Activated CD4-positive, alpha-beta memory T cell treated with anti-CD3 and anti-CD28 coated beads for 36 hours (primary cell): ENCODE measurements at regions of chr2 and their contacts with region 1.

Region 1: GRCh38 chr2:204260162-204260877 is 285.0 kb upstream of the PARD3B start:
- DNase-seq: peak; percentile 53
- H3K4me3 Mint-ChIP-seq: no peak overlapping the region
- H3K27ac Mint-ChIP-seq: no peak overlapping the region
- H3K4me1 Mint-ChIP-seq: no peaks in the 10 kb centered on the region
- H3K27me3 Mint-ChIP-seq: peaks cover 29% of the 10 kb centered on the region

Region 2: DNA sequence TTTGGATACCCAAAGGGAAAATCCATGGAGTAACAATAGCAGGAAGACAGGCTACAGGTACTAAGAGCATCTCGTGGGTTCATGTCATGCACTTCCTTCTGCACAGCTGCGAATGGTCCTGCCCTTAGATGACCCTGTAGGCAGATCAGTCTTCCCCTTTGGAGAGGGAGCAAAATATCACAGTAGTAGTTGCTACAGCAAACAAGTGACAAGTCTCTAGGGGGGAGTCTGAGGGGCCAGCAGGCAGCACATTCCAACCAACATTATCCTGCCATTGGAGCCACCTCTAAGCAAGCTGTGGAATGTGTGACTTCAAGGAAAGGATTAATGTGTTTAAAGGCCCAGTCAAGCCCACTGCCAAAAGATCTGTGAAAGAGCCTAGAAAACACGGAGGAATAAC is 11.8 kb after region 1 on chr2:
- CTCF ChIA-PET with region 1: interaction called, 19 read pairs
- POLR2A ChIA-PET with region 1: no interaction called
- intact Hi-C with region 1: no loop called
- DNase-seq: no peak
- H3K4me3 Mint-ChIP-seq: no peak overlapping the region
- H3K27ac Mint-ChIP-seq: no peak overlapping the region
- H3K4me1 Mint-ChIP-seq: no peaks in the 10 kb centered on the region
- H3K27me3 Mint-ChIP-seq: peaks cover 14% of the 10 kb centered on the region